ENCODE measurements at regions of chr14 and their contacts with region 1.

Region 1: DNA sequence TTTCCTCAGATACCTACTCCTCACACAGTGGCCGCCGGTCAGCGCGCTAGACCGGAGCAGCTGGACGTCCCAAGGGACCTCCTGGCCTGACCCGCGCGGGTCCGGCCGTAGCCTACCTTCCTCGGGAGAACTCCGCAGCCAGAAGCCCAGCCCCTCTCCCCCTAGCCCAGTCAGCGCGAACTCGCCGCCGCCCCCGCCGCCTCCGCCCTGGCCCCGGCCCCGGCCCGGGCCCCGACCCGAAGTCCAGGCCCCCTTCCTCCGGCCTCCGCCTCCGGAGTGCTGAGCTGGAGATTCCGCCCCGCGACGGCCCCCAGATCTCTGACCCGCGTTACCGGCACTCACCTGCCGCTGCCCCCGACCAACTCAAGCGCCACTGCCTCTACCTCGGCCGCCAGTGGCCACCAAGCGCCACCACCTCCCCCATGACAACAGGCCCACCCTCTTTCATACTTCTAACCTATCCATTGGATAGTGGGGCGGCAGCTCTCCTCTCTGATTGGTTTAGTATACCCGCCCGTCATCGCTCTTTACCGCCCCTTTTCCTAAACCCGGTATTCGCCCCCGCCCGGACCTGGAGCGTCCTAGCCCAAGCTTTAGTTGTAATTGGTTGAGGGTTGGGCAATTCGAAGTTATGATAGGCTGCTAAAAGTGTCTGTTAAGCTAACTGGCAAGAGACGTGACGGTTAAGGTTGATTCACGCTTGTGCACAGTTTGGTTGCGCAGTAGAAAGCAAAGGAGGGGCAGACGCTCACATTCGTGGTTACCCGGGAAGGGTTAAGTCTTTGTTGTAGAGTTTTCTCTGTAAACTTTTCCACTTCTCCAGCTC is at the start of gene NUMB:
- DNase-seq: peak; percentile 100
- ATAC-seq: peak; percentile 95
- H3K4me3 ChIP-seq: peak within 1 kb of the TSS; percentile 93
- H3K27ac ChIP-seq: peak within 1 kb of the TSS; percentile 92
- H3K4me1 ChIP-seq: peaks cover 13% of the 10 kb centered on the region
- H3K27me3 ChIP-seq: no peaks in the 10 kb centered on the region
- CTCF ChIP-seq: no peak
- POLR2A ChIP-seq: peak; percentile 77
- RAD21 ChIP-seq: no peak
- total RNA-seq, gene NUMB: 41.7 and 45.9 TPM in 2 replicates

Region 2: DNA sequence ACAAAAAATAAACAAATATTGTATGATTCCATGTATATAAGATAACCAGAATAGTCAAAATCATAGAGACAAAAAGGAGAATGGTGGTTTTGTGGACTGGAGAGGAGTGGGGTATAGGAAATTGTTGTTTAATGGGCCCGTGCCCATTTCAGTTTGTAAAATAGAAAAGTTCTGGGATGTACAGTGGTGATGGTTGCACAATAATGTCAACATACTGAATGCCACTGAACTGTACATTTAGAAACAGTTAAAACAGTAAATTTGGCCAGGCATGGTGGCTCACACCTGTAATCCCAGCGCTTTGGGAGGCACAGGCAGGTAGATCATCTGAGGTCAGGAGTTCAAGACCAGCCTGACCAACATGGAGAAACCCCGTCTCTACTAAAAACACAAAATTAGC is 40.1 kb before region 1 on chr14:
- CTCF ChIA-PET with region 1: no interaction called
- POLR2A ChIA-PET with region 1: no interaction called
- dilution Hi-C with region 1: no loop called
- in situ Hi-C with region 1: no loop called
- intact Hi-C with region 1: loop called (anchors 5 kb)
- DNase-seq: no peak
- ATAC-seq: no peak
- H3K4me3 ChIP-seq: no peak overlapping the region
- H3K27ac ChIP-seq: no peak overlapping the region
- H3K4me1 ChIP-seq: peaks cover 5% of the 10 kb centered on the region; the same call in 1 of the 2 replicates
- H3K27me3 ChIP-seq: no peaks in the 10 kb centered on the region
- CTCF ChIP-seq: no peak
- POLR2A ChIP-seq: no peak
- RAD21 ChIP-seq: no peak

Measured in IMR-90 (cell line).